Activated CD8-positive, alpha-beta T cell treated with anti-CD3 and anti-CD28 coated beads, Interleukin-2, amount 10 ng/mL, durations not matched to agents 7 days and 5 days (primary cell): ENCODE measurements at regions of chr15 and their contacts with region 1.

Region 1: GRCh38 chr15:40782580-40783227 is 12.9 kb downstream of the C15orf62 start:
- DNase-seq: peak; percentile 85
- ATAC-seq: peak; percentile 98
- H3K4me3 Mint-ChIP-seq: no peak overlapping the region
- H3K27ac Mint-ChIP-seq: no peak overlapping the region
- H3K4me1 Mint-ChIP-seq: peaks cover 24% of the 10 kb centered on the region
- H3K27me3 Mint-ChIP-seq: no peaks in the 10 kb centered on the region

Region 2: GRCh38 chr15:40706121-40706520 is 76.6 kb before region 1 on chr15:
- CTCF ChIA-PET with region 1: interaction called, 13 read pairs
- POLR2A ChIA-PET with region 1: no interaction called
- DNase-seq: no peak
- ATAC-seq: no peak
- H3K4me3 Mint-ChIP-seq: no peak overlapping the region
- H3K27ac Mint-ChIP-seq: no peak overlapping the region
- H3K4me1 Mint-ChIP-seq: peaks cover 6% of the 10 kb centered on the region
- H3K27me3 Mint-ChIP-seq: no peaks in the 10 kb centered on the region

Region 3: DNA sequence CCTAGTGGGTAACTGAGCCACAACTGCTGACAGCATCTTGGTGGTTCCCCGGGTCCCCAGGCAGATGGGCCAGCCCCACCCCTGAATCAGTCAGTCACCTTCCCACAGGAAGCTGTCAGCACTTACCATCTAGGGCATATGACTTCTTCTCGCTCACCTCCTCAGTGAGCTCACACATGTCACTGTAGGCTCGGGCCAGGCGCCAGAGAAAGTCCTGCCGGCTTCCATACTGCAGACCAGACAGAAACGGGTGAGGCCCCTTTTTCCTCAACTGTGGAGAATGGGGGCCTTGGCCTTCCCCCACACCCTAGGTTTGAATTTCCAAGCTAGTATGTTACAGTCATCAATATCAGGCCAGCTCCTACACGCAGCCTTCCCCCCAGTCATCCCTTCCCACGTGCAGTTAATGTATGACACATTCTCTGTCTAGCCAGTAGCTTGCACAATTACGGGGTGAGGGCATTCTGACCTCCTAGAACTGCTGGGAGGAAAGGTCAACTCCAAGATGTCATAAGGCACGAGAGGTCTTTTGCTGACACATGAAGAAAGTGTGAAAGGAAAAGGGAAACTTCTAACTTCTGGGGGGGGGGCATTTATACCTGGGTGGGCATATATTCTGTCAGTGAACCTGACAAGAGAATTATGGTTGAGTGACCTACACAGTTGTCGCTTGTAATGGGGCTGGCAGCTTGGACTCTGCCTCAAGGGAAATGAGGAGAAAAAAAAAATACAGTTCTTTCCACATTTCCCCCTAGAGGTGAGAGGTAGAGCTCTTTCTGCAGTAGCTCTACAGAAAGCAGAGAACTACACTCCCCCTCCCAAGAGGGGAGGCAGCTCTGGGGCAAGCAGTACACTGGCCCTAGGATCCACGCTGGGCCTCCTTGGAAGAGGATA is 38.5 kb before region 1 on chr15:
- CTCF ChIA-PET with region 1: interaction called, 107 read pairs
- POLR2A ChIA-PET with region 1: interaction called, 3 read pairs
- DNase-seq: peak; percentile 85
- ATAC-seq: peak; percentile 94
- H3K4me3 Mint-ChIP-seq: peak overlapping the region; percentile 35
- H3K27ac Mint-ChIP-seq: peak overlapping the region; percentile 87
- H3K4me1 Mint-ChIP-seq: peaks cover 45% of the 10 kb centered on the region
- H3K27me3 Mint-ChIP-seq: no peaks in the 10 kb centered on the region

Region 4: DNA sequence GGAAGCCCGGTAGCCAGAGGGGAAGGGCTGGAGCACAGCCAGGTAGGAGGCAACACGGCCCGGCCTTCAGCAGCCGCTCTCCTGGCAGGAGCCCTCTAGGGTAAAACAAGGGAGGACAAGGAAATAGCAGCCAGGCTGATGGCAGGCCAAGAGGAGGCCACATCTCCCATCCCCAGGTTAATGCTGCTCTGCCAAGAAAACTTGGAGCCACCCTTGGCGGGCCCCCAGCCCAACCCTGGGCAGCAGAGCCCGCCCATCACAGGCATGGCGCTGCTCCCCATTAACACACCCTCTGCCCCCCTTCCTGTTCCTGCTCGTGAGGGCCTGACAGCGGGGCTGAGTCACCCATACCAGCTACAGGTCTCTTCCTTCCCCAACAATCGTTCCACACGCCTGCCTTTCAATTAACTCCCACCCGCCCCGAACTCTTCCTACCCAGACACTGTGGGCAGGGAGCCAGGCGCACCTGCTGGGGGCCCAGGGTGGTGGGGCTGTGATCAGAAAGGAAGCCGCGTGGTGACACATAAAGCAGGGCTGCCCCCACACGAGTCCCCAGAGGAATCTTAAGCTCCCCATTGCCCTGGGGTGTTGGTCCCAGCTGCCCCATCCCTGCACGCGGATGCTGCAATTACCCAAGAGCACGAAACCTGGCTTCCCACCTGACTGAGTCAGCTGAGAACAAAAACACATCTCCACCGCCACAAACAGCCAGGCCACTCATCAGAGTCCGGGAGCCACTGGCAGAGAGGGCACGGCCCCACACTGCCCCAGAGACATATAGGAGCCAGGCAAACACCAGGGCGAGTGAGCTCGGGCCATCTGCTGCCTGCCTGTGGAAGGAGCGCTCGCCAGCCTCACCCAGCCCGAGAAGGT is 13.2 kb before region 1 on chr15 and contains the start of gene C15orf62:
- CTCF ChIA-PET with region 1: interaction called, 18 read pairs
- POLR2A ChIA-PET with region 1: interaction called, 8 read pairs
- DNase-seq: peak; percentile 72
- ATAC-seq: peak; percentile 50
- H3K4me3 Mint-ChIP-seq: peak within 1 kb of the TSS; percentile 54
- H3K27ac Mint-ChIP-seq: peak within 1 kb of the TSS; percentile 90
- H3K4me1 Mint-ChIP-seq: peaks cover 43% of the 10 kb centered on the region
- H3K27me3 Mint-ChIP-seq: no peaks in the 10 kb centered on the region
- total RNA-seq, gene C15orf62: 1.1 to 1.2 TPM

Region 5: DNA sequence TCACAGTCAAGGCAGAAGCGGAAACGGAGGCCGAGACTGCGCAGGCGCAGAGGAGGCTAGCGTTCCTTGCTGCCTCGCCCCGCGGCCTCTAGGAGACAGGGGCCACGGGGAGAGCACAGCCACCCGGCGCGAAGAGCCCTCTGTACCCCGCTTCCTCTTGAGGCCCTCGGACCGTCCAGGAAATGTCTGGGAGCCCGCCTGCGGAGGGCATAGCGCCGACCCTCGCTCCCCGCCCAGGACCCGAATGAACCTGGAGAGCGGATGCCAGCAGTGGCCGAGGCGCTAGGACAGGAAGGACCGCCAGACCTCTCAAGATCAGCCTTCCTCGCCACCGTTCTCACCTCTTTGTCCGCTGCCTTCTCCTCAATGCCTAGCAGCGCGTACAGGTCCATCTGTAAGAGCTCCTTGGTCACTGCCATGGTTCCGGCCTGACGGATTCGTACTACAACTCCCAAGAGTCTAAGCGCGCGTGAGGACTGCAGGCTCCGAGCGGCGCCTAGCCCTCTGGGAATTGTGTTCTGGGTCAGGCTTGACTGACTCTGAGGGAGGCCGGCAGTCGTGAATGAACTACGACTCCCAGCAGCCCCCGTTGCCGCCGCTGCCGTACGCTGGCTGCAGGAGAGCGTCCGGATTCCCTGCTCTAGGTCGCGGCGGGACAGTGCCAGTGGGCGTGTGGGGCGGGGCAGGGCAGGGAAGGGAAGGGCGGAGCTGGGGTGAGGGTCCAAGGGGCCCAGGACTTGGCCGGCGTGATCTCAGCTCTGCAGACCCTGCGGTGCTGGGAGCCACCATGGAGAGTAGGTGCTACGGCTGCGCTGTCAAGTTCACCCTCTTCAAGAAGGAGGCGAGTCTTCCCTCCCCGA is 24.6 kb after region 1 on chr15 and contains the starts of genes DNAJC17 and ZFYVE19:
- CTCF ChIA-PET with region 1: interaction called, 15 read pairs
- POLR2A ChIA-PET with region 1: interaction called, 3 read pairs
- DNase-seq: peak; percentile 97
- ATAC-seq: peak; percentile 98
- H3K4me3 Mint-ChIP-seq: peak within 1 kb of the TSS; percentile 94
- H3K27ac Mint-ChIP-seq: peak within 1 kb of the TSS; percentile 99
- H3K4me1 Mint-ChIP-seq: peaks cover 20% of the 10 kb centered on the region
- H3K27me3 Mint-ChIP-seq: no peaks in the 10 kb centered on the region
- total RNA-seq, gene DNAJC17: 42.9 to 47.2 TPM
- total RNA-seq, gene ZFYVE19: 29.4 to 35.6 TPM